Natural killer cell (primary cell): ENCODE measurements at regions of chr17 and their contacts with region 1.

Region 1: DNA sequence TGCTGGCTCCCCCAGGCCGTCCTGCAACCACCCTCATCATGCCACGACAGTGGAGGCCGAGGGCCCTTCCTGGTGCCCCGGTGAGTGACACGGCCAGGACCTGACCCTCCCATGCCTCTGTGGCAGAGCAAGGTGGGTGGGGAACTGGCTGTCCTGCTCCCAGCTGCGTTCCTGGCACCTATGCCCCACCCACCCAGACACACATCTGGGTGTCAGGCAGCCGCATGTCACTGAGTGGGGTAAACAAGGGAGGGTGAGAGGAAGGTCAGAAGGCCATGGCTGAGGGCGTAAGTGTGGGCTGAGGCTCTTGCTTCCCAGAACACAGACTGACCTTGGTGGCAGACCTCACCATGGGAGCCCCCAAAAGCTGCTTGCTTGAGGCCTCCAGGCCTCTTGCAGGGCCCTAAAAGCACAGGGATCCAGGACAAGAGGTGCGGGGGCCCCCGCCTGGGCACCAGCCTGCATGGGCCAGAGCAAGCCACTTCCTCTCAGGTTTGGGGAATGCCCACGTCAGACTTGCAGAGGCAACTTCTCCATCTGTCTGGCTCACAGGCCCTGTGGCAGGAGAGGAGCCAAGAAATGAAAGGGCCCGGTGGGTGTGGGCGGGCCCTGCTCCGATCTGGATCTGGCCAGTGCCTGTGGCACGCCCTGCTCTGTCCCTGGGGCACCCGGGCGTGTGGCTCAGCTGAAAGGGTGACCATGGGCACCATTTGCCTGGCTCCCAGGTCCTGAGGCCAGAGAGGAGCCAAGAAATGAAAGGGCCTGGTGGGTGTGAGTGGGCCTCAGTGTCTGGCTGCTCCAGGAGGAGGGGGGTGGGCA is 3.9 kb upstream of the CCDC57 start:
- DNase-seq: peak; percentile 69 to 79
- ATAC-seq: peak; percentile 53 to 79 (median 65)
- H3K4me3 ChIP-seq: no peak overlapping the region
- H3K4me3 Mint-ChIP-seq: peak overlapping the region; percentile 72
- H3K27ac ChIP-seq: peak overlapping the region; percentile 94
- H3K27ac Mint-ChIP-seq: peak overlapping the region; percentile 92 to 96
- H3K4me1 ChIP-seq: peaks cover 73% of the 10 kb centered on the region
- H3K4me1 Mint-ChIP-seq: peaks cover 28 to 53% of the 10 kb centered on the region in 2 donors
- H3K27me3 ChIP-seq: no peaks in the 10 kb centered on the region
- H3K27me3 Mint-ChIP-seq: no peaks in the 10 kb centered on the region
- CTCF ChIP-seq: no peak

Region 2: GRCh38 chr17:82230627-82231311 is 14.3 kb after region 1 on chr17:
- intact Hi-C with region 1: loop called (anchors 2 kb)
- DNase-seq: peak; percentile 68 to 73
- ATAC-seq: peak; percentile 36 to 60 (median 43)
- H3K4me3 ChIP-seq: peak overlapping the region; percentile 57
- H3K4me3 Mint-ChIP-seq: peak overlapping the region; percentile 85
- H3K27ac ChIP-seq: peak overlapping the region; percentile 75
- H3K27ac Mint-ChIP-seq: peak overlapping the region; percentile 80 to 91
- H3K4me1 ChIP-seq: peaks cover 50% of the 10 kb centered on the region
- H3K4me1 Mint-ChIP-seq: peaks cover 0 to 24% of the 10 kb centered on the region in 2 donors
- H3K27me3 ChIP-seq: no peaks in the 10 kb centered on the region
- H3K27me3 Mint-ChIP-seq: no peaks in the 10 kb centered on the region
- CTCF ChIP-seq: peak; percentile 58

Region 3: GRCh38 chr17:82315703-82316358 is 99.3 kb after region 1 on chr17:
- intact Hi-C with region 1: no loop called
- DNase-seq: peak in 1 of 2 donors; percentile 78
- ATAC-seq: peak; percentile 30 to 44 (median 40)
- H3K4me3 ChIP-seq: peak overlapping the region; percentile 77
- H3K4me3 Mint-ChIP-seq: peak overlapping the region; percentile 96
- H3K27ac ChIP-seq: peak overlapping the region; percentile 78
- H3K27ac Mint-ChIP-seq: no peak overlapping the region
- H3K4me1 ChIP-seq: peaks cover 54% of the 10 kb centered on the region
- H3K4me1 Mint-ChIP-seq: peaks cover 14 to 35% of the 10 kb centered on the region in 2 donors
- H3K27me3 ChIP-seq: no peaks in the 10 kb centered on the region
- H3K27me3 Mint-ChIP-seq: no peaks in the 10 kb centered on the region
- CTCF ChIP-seq: no peak

Region 4: DNA sequence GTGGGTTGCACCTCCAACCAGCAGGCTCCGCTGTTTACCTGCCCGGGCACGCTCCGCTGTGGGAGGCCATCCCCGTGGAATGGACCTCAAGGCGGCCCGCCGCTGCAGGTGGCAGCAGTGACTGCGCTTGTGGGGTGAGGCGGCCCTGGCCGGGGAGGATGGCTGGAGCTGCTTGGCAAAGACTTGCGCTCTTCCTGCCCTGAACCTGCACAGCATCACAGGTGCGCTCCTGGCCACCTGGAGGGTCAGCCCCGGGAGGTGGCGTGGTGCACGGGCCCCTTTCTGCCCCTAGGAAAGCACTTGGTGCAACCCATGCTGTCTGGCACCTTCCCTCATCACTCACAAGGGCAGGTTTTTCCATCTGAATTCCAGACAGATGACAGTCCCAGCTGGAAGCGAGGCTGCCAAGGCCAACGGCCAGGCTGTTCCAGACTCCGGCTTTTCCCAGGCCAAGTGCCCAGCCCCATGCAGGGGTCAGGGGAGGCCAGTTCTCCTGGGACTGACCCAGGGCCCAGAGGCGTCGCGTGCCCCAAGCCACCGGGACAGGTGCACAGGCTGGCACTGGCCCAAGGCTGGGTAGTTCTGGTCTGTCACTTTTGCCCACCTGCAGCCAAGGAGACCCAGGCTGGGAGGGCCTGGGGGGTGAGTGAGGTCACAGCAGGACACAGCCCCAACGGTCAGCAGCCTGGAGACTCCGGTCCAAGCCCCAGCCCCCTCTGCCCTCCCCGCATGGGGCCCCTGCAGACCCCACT is 168.4 kb after region 1 on chr17:
- intact Hi-C with region 1: no loop called
- DNase-seq: no peak
- ATAC-seq: no peak
- H3K4me3 ChIP-seq: no peak overlapping the region
- H3K4me3 Mint-ChIP-seq: no peak overlapping the region
- H3K27ac ChIP-seq: no peak overlapping the region
- H3K27ac Mint-ChIP-seq: no peak overlapping the region
- H3K4me1 ChIP-seq: peaks cover 5% of the 10 kb centered on the region
- H3K4me1 Mint-ChIP-seq: peaks cover 5 to 16% of the 10 kb centered on the region in 2 donors
- H3K27me3 ChIP-seq: peaks cover 15% of the 10 kb centered on the region
- H3K27me3 Mint-ChIP-seq: peaks cover 5 to 13% of the 10 kb centered on the region in 2 donors
- CTCF ChIP-seq: no peak

Region 5: DNA sequence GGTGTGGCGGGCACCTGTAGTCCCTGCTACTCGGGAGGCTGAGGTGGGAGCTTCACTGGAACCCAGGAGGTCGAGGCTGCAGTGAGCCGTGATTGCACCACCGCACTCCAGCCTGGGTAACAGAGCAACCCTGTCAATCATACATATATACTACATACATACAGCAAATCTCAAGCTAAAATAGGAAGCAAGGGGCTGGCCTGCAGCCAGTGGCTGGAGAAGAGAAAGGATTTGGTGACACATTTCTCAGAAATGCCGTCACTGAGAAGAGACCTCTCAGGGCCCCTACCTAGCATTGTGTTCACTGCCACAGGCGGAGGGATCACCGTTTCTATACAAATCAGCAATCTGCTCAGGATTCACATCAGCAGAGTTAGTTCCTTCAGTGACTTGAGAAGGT is 258.9 kb after region 1 on chr17:
- intact Hi-C with region 1: no loop called
- DNase-seq: no peak
- ATAC-seq: no peak
- H3K4me3 ChIP-seq: no peak overlapping the region
- H3K4me3 Mint-ChIP-seq: no peak overlapping the region
- H3K27ac ChIP-seq: no peak overlapping the region
- H3K27ac Mint-ChIP-seq: no peak overlapping the region
- H3K4me1 ChIP-seq: peaks cover 20% of the 10 kb centered on the region
- H3K4me1 Mint-ChIP-seq: peaks cover 15 to 16% of the 10 kb centered on the region in 2 donors
- H3K27me3 ChIP-seq: no peaks in the 10 kb centered on the region
- H3K27me3 Mint-ChIP-seq: no peaks in the 10 kb centered on the region
- CTCF ChIP-seq: no peak